Activated T-helper 2 cell treated with anti-CD3 and anti-CD28 coated beads, Interferon-gamma antibody, Interleukin-2, Interleukin-4, amounts not matched to agents 10 μg/mL and 5 μg/mL and 100 μg/mL, durations not matched to agents 14 hours and 24 hours and 36 hours (primary cell): ENCODE measurements at regions of chr11 and their contacts with region 1.

Region 1: DNA sequence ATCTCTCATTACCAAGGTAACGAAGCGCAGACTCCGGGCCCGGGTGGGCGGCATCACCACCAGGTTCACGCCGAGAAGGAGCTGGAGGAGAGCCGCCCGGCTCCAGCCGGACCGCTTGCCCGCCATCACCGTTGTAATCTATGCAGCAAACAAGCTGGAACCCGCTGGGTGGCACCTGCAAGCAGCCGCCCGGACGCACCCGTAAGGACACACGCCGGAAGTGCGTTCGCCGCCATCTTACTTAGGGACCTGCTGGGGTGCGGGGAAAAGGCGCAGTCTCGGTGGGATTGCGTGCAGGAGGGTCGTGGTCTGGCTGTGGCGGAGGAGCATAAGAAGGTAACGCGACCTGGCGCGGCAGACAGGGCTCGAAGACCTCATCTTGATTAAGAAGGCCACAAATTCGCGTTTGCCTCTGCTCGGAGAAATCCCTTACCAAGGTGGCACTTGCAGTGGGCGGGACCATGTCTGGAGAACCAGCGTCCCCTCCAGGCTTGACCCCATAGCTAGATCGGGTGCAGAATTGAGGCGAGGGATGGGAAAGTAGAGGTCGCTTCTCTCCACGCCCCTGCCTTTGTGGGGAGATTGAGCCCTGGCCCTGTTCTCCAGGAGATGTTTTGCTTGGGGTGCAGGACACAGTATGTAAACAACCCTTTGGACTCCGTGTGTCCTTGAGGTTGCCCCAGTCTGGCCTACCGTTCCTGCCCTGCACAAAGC is at the start of gene ACP2:
- DNase-seq: peak; percentile 85
- H3K4me3 Mint-ChIP-seq: peak within 1 kb of the TSS; percentile 98
- H3K27ac Mint-ChIP-seq: peak within 1 kb of the TSS; percentile 96
- H3K4me1 Mint-ChIP-seq: peaks cover 14% of the 10 kb centered on the region
- H3K27me3 Mint-ChIP-seq: no peaks in the 10 kb centered on the region
- total RNA-seq, gene ACP2: 23.2 and 24.5 TPM in 2 replicates

Region 2: GRCh38 chr11:47213985-47214564 is 34.7 kb before region 1 on chr11:
- intact Hi-C with region 1: no loop called
- DNase-seq: peak; percentile 79
- H3K4me3 Mint-ChIP-seq: peak overlapping the region; percentile 95
- H3K27ac Mint-ChIP-seq: peak overlapping the region; percentile 100
- H3K4me1 Mint-ChIP-seq: peaks cover 28% of the 10 kb centered on the region
- H3K27me3 Mint-ChIP-seq: no peaks in the 10 kb centered on the region

Region 3: GRCh38 chr11:47233989-47234668 is 14.7 kb before region 1 on chr11:
- intact Hi-C with region 1: loop called (anchors 1 kb)
- DNase-seq: no peak
- H3K4me3 Mint-ChIP-seq: no peak overlapping the region
- H3K27ac Mint-ChIP-seq: peak overlapping the region; percentile 61
- H3K4me1 Mint-ChIP-seq: peaks cover 27% of the 10 kb centered on the region
- H3K27me3 Mint-ChIP-seq: no peaks in the 10 kb centered on the region

Region 4: GRCh38 chr11:47348859-47349258 is 100.0 kb after region 1 on chr11:
- intact Hi-C with region 1: no loop called
- DNase-seq: no peak
- H3K4me3 Mint-ChIP-seq: no peak overlapping the region
- H3K27ac Mint-ChIP-seq: no peak overlapping the region
- H3K4me1 Mint-ChIP-seq: no peaks in the 10 kb centered on the region
- H3K27me3 Mint-ChIP-seq: no peaks in the 10 kb centered on the region